ENCODE measurements at regions of chr3 and their contacts with region 1.

Region 1: DNA sequence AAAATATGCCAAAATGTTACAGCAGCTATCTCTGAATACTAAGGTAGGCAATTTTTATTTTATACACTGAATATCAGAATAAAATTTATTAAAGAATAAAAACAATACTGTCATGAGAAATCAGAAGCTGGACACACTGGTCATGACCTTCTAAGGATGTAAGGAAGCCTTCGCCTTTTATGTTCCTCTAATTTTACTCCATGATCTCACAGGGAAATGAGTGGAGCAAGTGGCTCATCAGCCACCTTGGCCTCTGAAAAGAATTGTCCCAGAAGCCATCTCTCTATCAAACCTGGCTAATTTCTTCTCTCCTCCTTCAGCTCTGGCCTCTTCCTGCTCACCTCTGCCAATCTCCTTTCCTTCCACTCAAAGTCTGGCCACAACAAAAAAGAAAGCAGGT is 48.6 kb downstream of the THRB start:
- DNase-seq: no peak
- ATAC-seq: peak; percentile 55 to 86
- H3K4me3 ChIP-seq: no peak overlapping the region
- H3K27ac ChIP-seq: peak overlapping the region; percentile 51 to 75 (median 70)
- H3K4me1 ChIP-seq: peaks cover 58% of the 10 kb centered on the region in 2 donors
- H3K27me3 ChIP-seq: no peaks in the 10 kb centered on the region
- CTCF ChIP-seq: no peak
- POLR2A ChIP-seq: no peak

Region 2: GRCh38 chr3:24420224-24420623 is 25.8 kb before region 1 on chr3:
- in situ Hi-C with region 1: no loop called
- intact Hi-C with region 1: loop called (anchors 1 kb)
- DNase-seq: no peak
- ATAC-seq: no peak
- H3K4me3 ChIP-seq: no peak overlapping the region
- H3K27ac ChIP-seq: peak overlapping the region in 2 of 4 donors; percentile 23 to 25
- H3K4me1 ChIP-seq: peaks cover 26 to 36% of the 10 kb centered on the region in 2 donors
- H3K27me3 ChIP-seq: no peaks in the 10 kb centered on the region
- CTCF ChIP-seq: no peak
- POLR2A ChIP-seq: no peak

Region 3: DNA sequence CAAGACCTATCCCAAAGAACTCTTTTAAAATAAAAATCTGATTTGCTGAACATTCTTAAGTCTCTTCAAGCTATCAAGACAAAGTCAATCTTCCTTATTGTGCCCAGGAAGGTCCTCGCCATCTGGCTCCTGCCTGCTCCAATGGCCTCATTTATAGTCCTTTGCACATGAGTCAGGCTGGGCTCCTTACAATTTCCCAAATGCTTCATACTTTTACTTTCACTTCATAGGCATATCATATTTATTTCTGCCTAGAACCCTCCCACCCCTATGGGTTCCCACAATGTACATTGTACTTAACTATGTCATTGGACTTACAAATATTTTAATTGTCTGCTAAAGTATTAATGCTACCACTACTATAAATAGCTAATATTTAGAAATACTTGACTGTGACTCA is 39.5 kb after region 1 on chr3:
- in situ Hi-C with region 1: no loop called
- intact Hi-C with region 1: loop called (anchors 5 kb)
- DNase-seq: no peak
- ATAC-seq: peak in 1 of 2 donors; percentile 15
- H3K4me3 ChIP-seq: no peak overlapping the region
- H3K27ac ChIP-seq: peak overlapping the region; percentile 18 to 99 (median 46)
- H3K4me1 ChIP-seq: peaks cover 94 to 99% of the 10 kb centered on the region in 2 donors
- H3K27me3 ChIP-seq: no peaks in the 10 kb centered on the region
- CTCF ChIP-seq: no peak
- POLR2A ChIP-seq: no peak

Region 4: DNA sequence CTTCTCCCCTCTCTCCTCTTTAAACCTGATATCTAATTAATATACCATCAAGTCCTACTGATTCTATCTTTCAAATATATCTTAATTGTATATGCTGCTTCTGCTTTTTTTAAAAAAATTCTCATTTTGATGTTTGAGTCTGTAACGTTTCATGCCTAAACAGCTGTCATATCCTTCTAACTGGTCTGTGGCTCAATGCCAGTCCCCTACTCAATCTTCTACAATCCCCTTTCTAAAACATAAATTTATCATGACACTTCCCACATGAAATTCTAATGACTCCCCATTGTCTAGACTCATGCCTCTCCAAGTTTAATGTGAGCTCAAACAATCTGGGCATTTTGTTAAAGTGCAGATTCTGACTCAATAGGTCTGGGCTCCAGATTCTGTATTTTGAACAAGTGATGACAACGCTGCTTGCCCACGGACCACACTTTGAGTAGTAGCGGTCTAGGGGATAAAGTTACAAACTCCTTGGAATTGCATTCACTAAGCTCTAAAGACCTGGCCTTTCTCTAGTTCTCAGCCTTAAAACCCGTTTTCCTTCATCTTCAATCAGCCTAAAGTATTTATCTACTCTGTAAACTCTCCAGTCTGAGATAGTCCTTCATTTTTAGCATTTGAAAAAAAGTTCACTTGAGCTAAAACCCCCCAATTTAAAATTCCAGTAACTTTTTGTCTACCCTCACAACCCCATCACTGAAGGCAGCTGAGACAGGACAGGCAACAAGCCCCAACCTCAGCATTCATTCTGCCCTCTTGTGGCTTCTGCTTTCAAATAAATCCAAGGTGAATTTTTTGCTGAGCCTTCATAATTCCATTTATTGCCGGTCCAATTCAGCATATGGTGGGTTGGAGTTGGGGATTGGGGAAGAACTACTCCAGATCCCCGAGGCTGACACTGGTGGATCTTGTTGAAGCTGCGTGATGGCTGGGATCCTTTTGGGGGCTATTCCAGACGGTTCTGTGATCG is 136.7 kb after region 1 on chr3:
- in situ Hi-C with region 1: no loop called
- intact Hi-C with region 1: no loop called
- DNase-seq: peak; percentile 6 to 14
- ATAC-seq: peak; percentile 73 to 79
- H3K4me3 ChIP-seq: no peak overlapping the region
- H3K27ac ChIP-seq: no peak overlapping the region
- H3K4me1 ChIP-seq: peaks cover 0 to 6% of the 10 kb centered on the region in 2 donors
- H3K27me3 ChIP-seq: no peaks in the 10 kb centered on the region
- CTCF ChIP-seq: peak; percentile 20 to 53 (median 41)
- POLR2A ChIP-seq: no peak